WTC11 (cell line): ENCODE measurements at regions of chrX and their contacts with region 1.

Region 1: DNA sequence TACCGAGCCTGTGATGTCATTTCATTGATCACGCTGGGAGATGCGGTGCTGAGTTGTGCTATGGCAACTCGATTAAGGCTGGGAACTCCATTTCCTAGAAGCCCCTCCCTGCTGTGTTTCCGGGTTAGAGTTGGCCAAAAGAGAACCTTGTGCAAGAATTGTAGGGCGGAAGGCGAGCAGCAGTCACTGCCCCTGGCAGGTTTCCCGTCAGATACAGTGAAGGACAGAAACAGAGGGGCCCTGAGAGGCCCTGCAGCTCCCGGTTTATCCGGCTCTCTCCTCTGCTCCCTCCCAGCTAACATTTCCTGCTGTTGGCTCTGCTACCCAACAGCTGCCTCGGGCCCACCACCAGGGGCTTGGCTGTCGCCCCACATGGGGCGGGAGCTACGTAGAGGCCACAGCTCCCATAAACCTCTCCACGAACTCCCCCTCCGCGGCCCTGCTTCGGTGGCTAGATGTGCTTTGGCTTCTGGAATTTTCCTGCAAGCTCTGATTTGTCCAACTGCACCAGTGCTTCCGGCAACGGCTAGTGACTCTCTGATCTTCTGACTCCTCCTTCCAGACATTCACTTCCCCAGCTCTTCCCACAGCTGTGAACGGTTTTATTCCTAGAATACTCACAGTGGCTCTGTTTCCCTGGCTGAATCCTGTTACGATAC is 74.9 kb upstream of the USP9X start:
- DNase-seq: peak; percentile 41
- ATAC-seq: peak; percentile 95
- H3K4me3 Mint-ChIP-seq: no peak overlapping the region
- H3K27ac Mint-ChIP-seq: peak overlapping the region; percentile 65
- H3K4me1 Mint-ChIP-seq: peaks cover 32% of the 10 kb centered on the region
- H3K27me3 Mint-ChIP-seq: no peaks in the 10 kb centered on the region; the same call in 1 of the 2 replicates
- CTCF ChIP-seq: no peak

Region 2: GRCh38 chrX:40933132-40933705 is 77.1 kb before region 1 on chrX:
- CTCF ChIA-PET with region 1: no interaction called
- POLR2A ChIA-PET with region 1: interaction called, 10 read pairs
- DNase-seq: no peak
- ATAC-seq: no peak
- H3K4me3 Mint-ChIP-seq: no peak overlapping the region
- H3K27ac Mint-ChIP-seq: peak overlapping the region; percentile 82
- H3K4me1 Mint-ChIP-seq: peaks cover 11% of the 10 kb centered on the region
- H3K27me3 Mint-ChIP-seq: no peaks in the 10 kb centered on the region
- CTCF ChIP-seq: no peak

Region 3: GRCh38 chrX:41033299-41033698 is 23.0 kb after region 1 on chrX:
- CTCF ChIA-PET with region 1: no interaction called
- POLR2A ChIA-PET with region 1: no interaction called
- DNase-seq: no peak
- ATAC-seq: peak; percentile 24; the same call in 1 of the 2 replicates
- H3K4me3 Mint-ChIP-seq: no peak overlapping the region
- H3K27ac Mint-ChIP-seq: no peak overlapping the region
- H3K4me1 Mint-ChIP-seq: peaks cover 23% of the 10 kb centered on the region
- H3K27me3 Mint-ChIP-seq: no peaks in the 10 kb centered on the region
- CTCF ChIP-seq: no peak

Region 4: GRCh38 chrX:41045960-41046567 is 35.7 kb after region 1 on chrX:
- CTCF ChIA-PET with region 1: no interaction called
- POLR2A ChIA-PET with region 1: no interaction called
- DNase-seq: no peak
- ATAC-seq: peak; percentile 67
- H3K4me3 Mint-ChIP-seq: no peak overlapping the region
- H3K27ac Mint-ChIP-seq: peak overlapping the region; percentile 78
- H3K4me1 Mint-ChIP-seq: peaks cover 27% of the 10 kb centered on the region
- H3K27me3 Mint-ChIP-seq: no peaks in the 10 kb centered on the region
- CTCF ChIP-seq: no peak

Region 5: GRCh38 chrX:41084044-41084892 is 74.0 kb after region 1 on chrX:
- CTCF ChIA-PET with region 1: no interaction called
- POLR2A ChIA-PET with region 1: interaction called, 10 read pairs
- DNase-seq: peak; percentile 94
- ATAC-seq: peak; percentile 68
- H3K4me3 Mint-ChIP-seq: peak overlapping the region; percentile 81
- H3K27ac Mint-ChIP-seq: peak overlapping the region; percentile 99
- H3K4me1 Mint-ChIP-seq: peaks cover 34% of the 10 kb centered on the region
- H3K27me3 Mint-ChIP-seq: no peaks in the 10 kb centered on the region
- CTCF ChIP-seq: no peak

Region 6: DNA sequence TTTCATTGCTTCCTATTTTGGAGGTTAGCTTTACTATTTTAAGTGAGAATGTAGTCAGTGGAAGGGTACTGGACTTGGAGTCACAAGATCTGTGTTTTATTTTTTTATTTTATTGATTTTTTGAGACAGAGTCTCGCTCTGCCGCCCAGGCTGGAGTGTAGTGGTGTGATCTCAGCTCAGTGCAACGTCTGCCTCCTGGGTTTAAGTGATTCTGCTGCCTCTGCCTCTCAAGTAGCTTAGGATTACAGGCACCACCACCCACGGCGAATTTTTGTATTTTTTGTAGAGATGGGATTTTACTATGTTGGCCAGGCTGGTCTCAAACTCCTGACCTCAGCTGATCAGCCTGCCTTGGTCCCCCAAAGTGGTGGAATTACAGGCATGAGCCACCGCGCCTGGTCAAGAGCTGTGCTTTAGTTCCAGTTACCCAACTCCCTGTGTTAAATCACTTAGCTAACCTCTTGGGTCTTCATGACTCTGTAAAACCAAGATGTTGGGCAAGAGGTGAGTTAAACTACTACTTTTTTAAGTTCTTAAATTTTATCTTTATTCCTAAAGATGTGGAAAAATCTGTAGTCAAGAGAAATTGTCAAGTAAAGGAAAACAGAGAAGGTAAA is 86.1 kb after region 1 on chrX:
- CTCF ChIA-PET with region 1: no interaction called
- POLR2A ChIA-PET with region 1: no interaction called
- DNase-seq: no peak
- ATAC-seq: no peak
- H3K4me3 Mint-ChIP-seq: peak overlapping the region; percentile 28
- H3K27ac Mint-ChIP-seq: 0 out of 2 replicates have a peak overlapping the region, but pooled peaks have one; percentile 18
- H3K4me1 Mint-ChIP-seq: peaks cover 63% of the 10 kb centered on the region
- H3K27me3 Mint-ChIP-seq: no peaks in the 10 kb centered on the region; the same call in 1 of the 2 replicates
- CTCF ChIP-seq: no peak

Region 7: DNA sequence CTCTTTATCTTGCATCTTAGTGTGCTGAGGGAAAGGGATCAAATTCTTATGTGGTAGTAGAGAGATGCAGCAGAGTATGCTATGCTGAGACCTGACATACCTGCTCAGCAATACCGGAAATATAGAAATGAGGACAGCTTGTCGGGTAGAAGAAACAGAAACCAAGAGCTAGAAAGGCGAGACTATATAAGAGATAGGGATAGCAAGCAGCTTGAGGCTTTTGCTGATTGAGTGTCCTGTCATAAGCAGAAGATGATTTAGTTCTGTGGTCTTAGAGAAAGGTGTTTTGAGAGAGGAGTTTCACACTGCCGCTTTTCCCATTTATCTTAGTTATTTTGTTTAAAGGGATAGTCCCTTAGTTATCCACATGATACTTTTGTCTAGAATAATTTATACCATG is 106.6 kb after region 1 on chrX:
- CTCF ChIA-PET with region 1: interaction called, 11 read pairs
- POLR2A ChIA-PET with region 1: no interaction called
- DNase-seq: no peak
- ATAC-seq: no peak
- H3K4me3 Mint-ChIP-seq: peak overlapping the region; percentile 48
- H3K27ac Mint-ChIP-seq: peak overlapping the region; percentile 90
- H3K4me1 Mint-ChIP-seq: peaks cover 76% of the 10 kb centered on the region
- H3K27me3 Mint-ChIP-seq: no peaks in the 10 kb centered on the region
- CTCF ChIP-seq: no peak